ENCODE measurements at regions of chr18 and their contacts with region 1.

Region 1: DNA sequence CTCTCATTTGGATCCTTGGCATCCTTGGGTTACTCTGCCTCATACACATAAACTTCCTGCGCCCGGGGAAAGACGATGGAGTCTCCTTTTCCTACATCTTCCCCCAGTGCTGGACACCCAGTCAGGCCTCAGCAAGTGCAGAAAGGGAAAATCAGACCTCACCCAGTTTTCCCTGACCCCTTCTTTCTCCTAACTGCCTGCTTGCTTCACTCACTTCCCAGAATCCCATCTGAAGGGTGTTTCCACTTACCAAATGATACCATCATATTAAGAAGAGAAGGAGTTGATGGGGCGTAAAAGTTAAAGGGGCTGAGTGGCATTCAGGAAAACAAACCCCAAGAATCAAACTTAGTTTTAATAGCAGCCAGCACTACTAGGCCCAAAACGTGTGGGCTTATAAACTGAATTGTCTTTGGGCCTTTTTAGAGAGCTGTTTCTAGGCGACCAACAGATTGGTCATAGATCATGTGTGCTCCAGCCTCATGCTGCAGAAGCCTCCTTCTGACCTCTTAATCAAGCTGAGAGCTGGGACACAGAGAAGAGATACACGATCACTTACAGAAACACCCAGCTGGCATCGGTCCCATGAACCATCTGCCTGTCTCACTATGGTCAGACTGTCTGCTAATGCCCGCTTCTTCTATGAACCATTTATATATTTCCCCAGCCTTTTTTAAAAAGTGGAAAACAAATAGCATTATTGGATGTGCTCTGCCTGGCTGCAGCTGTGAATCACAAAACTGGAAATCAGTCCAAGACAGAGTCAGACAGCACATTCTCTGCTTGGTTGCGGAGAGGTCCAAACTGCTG is 165.7 kb upstream of the SLC14A2 start:
- DNase-seq: no peak
- ATAC-seq: no peak
- H3K4me3 ChIP-seq: no peak overlapping the region
- H3K4me3 Mint-ChIP-seq: no peak overlapping the region
- H3K27ac ChIP-seq: no peak overlapping the region
- H3K27ac Mint-ChIP-seq: no peak overlapping the region
- H3K4me1 ChIP-seq: no peaks in the 10 kb centered on the region
- H3K4me1 Mint-ChIP-seq: no peaks in the 10 kb centered on the region
- H3K27me3 ChIP-seq: no peaks in the 10 kb centered on the region
- H3K27me3 Mint-ChIP-seq: peaks cover 4% of the 10 kb centered on the region
- CTCF ChIP-seq: no peak

Region 2: GRCh38 chr18:43893001-43893637 is 1556.5 kb before region 1 on chr18:
- CTCF ChIA-PET with region 1: no interaction called
- POLR2A ChIA-PET with region 1: no interaction called
- intact Hi-C with region 1: loop called in 1 of 2 experiments (anchors 5 kb)
- DNase-seq: no peak
- ATAC-seq: no peak
- H3K4me3 ChIP-seq: no peak overlapping the region
- H3K4me3 Mint-ChIP-seq: no peak overlapping the region
- H3K27ac ChIP-seq: no peak overlapping the region
- H3K27ac Mint-ChIP-seq: no peak overlapping the region
- H3K4me1 ChIP-seq: no peaks in the 10 kb centered on the region
- H3K4me1 Mint-ChIP-seq: no peaks in the 10 kb centered on the region
- H3K27me3 ChIP-seq: no peaks in the 10 kb centered on the region
- H3K27me3 Mint-ChIP-seq: no peaks in the 10 kb centered on the region
- CTCF ChIP-seq: no peak

Region 3: DNA sequence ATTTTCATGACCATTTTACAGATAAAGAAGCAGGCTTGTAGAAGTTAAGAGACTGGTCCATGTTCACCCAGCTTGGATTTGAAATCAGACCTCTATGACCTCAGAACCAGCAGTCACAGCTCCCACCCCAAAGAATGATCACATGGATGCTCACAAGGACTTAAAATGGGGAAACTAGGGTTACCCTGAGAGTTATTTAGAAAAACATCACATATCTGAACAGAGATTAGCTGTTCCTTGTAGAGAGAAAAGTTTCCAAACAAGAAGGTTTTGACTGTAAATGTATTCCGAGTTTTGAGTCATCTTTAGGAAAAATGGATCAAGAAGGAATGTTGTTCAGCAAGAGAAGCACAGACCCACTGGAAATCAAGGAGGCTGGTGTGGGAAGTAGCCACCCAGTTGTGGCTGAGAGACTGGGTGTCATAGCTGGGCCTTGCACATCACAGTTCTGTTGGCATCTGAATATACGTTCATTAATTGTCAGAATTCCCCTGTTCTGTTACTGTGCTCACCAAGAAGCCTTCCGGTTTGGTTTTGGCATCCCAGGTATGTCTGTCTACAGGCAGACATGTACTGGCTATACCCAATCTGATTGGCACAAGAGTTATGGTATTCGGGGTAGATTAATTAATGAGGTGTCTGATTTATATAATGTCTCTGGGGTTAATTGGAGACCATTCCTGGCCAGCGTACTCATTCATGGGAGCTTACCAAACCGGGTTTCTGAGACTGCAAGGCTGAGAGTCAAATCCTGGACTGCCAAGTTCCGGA is 206.1 kb before region 1 on chr18:
- CTCF ChIA-PET with region 1: no interaction called
- POLR2A ChIA-PET with region 1: no interaction called
- intact Hi-C with region 1: no loop called
- DNase-seq: no peak
- ATAC-seq: no peak
- H3K4me3 ChIP-seq: no peak overlapping the region
- H3K4me3 Mint-ChIP-seq: no peak overlapping the region
- H3K27ac ChIP-seq: no peak overlapping the region
- H3K27ac Mint-ChIP-seq: no peak overlapping the region
- H3K4me1 ChIP-seq: no peaks in the 10 kb centered on the region
- H3K4me1 Mint-ChIP-seq: no peaks in the 10 kb centered on the region
- H3K27me3 ChIP-seq: no peaks in the 10 kb centered on the region
- H3K27me3 Mint-ChIP-seq: peaks cover 4% of the 10 kb centered on the region
- CTCF ChIP-seq: no peak